Breast epithelium (tissue), 4 donors: ENCODE measurements at regions of chr18 and their contacts with region 1.

Region 1: DNA sequence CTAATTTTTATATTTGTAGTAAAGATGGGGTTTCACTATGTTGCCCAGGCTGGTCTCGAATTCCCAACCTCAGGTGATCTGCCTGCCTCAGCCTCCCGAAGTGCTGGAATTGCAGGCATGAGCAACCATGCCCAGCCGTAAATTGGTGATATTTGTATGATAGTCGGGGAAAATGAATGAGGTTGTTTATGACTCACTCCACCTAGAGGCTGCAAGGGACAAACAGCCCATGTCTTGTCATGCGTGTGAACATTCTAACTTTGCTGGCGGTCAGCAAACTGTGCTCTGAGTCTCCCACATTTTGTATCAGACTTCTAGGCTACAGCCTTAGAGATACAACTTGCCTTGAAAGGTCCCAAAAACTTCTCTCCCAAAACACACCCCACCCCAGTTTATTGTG is 133.5 kb upstream of the DTNA start:
- DNase-seq: no peak
- H3K4me3 ChIP-seq: no peak overlapping the region
- H3K27ac ChIP-seq: no peak overlapping the region
- H3K4me1 ChIP-seq: no peaks in the 10 kb centered on the region
- H3K27me3 ChIP-seq: no peaks in the 10 kb centered on the region
- CTCF ChIP-seq: no peak
- POLR2A ChIP-seq: no peak

Region 2: GRCh38 chr18:34639687-34640086 is 63.1 kb after region 1 on chr18:
- intact Hi-C with region 1: no loop called
- DNase-seq: no peak
- H3K4me3 ChIP-seq: no peak overlapping the region
- H3K27ac ChIP-seq: no peak overlapping the region
- H3K4me1 ChIP-seq: no peaks in the 10 kb centered on the region
- H3K27me3 ChIP-seq: no peaks in the 10 kb centered on the region
- CTCF ChIP-seq: no peak
- POLR2A ChIP-seq: no peak

Region 3: GRCh38 chr18:34929336-34929780 is 352.7 kb after region 1 on chr18:
- intact Hi-C with region 1: loop called (anchors 5 kb)
- DNase-seq: no peak
- H3K4me3 ChIP-seq: no peak overlapping the region
- H3K27ac ChIP-seq: no peak overlapping the region
- H3K4me1 ChIP-seq: no peaks in the 10 kb centered on the region
- H3K27me3 ChIP-seq: no peaks in the 10 kb centered on the region
- CTCF ChIP-seq: no peak
- POLR2A ChIP-seq: no peak